Activated CD4-positive, alpha-beta T cell treated with anti-CD3 and anti-CD28 coated beads, Interleukin-2, amount 10 ng/mL, durations not matched to agents 7 days and 5 days (primary cell): ENCODE measurements at regions of chr11 and their contacts with region 1.

Region 1: GRCh38 chr11:59753650-59754493 is 1.3 kb upstream of the STX3 start:
- DNase-seq: peak; percentile 89
- H3K4me3 Mint-ChIP-seq: peak overlapping the region; percentile 86
- H3K27ac Mint-ChIP-seq: peak overlapping the region; percentile 84
- H3K4me1 Mint-ChIP-seq: peaks cover 33% of the 10 kb centered on the region
- H3K27me3 Mint-ChIP-seq: peaks cover 5% of the 10 kb centered on the region

Region 2: GRCh38 chr11:59767225-59767611 is 13.3 kb after region 1 on chr11:
- CTCF ChIA-PET with region 1: interaction called, 27 read pairs
- POLR2A ChIA-PET with region 1: no interaction called
- DNase-seq: peak; percentile 67
- H3K4me3 Mint-ChIP-seq: no peak overlapping the region
- H3K27ac Mint-ChIP-seq: peak overlapping the region; percentile 78
- H3K4me1 Mint-ChIP-seq: peaks cover 19% of the 10 kb centered on the region
- H3K27me3 Mint-ChIP-seq: no peaks in the 10 kb centered on the region

Region 3: DNA sequence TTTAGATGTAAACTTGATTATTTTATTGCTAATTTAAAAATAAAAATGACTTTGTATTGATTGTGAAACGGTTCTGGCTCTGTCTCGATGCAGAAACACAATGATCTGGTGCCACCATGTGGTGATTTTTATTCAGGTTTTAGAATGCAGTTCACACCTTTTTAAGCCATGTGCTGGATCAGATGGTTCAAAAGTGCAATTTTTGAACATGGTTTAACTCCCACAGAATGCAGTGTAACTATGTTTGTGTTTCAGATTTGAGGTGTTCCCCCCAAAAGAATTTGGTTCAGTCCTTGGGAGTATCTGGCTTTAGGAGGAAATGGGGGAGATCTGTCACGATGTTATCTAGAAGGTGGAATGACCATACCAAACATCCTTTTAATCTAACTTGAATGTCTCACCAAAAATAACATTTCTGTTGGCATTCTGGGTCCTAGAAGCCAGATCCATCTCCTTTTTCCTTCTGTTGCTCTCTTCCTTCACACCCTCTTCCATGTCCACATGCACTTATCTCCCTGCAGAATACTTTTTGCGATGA is 48.8 kb after region 1 on chr11:
- CTCF ChIA-PET with region 1: interaction called, 30 read pairs
- POLR2A ChIA-PET with region 1: interaction called, 5 read pairs
- DNase-seq: peak; percentile 79
- H3K4me3 Mint-ChIP-seq: no peak overlapping the region
- H3K27ac Mint-ChIP-seq: no peak overlapping the region
- H3K4me1 Mint-ChIP-seq: peaks cover 15% of the 10 kb centered on the region
- H3K27me3 Mint-ChIP-seq: no peaks in the 10 kb centered on the region

Region 4: GRCh38 chr11:59992425-59992824 is 238.6 kb after region 1 on chr11:
- CTCF ChIA-PET with region 1: no interaction called
- POLR2A ChIA-PET with region 1: no interaction called
- DNase-seq: no peak
- H3K4me3 Mint-ChIP-seq: no peak overlapping the region
- H3K27ac Mint-ChIP-seq: no peak overlapping the region
- H3K4me1 Mint-ChIP-seq: no peaks in the 10 kb centered on the region
- H3K27me3 Mint-ChIP-seq: no peaks in the 10 kb centered on the region